Activated CD4-positive, alpha-beta memory T cell treated with anti-CD3 and anti-CD28 coated beads, Interleukin-2, amount 10 ng/mL, durations not matched to agents 7 days and 5 days (primary cell): ENCODE measurements at regions of chr7 and their contacts with region 1.

Region 1: GRCh38 chr7:104883718-104884452 is 130.1 kb upstream of the KMT2E start:
- DNase-seq: peak; percentile 72
- H3K4me3 Mint-ChIP-seq: no peak overlapping the region
- H3K27ac Mint-ChIP-seq: no peak overlapping the region
- H3K4me1 Mint-ChIP-seq: peaks cover 15% of the 10 kb centered on the region
- H3K27me3 Mint-ChIP-seq: peaks cover 11% of the 10 kb centered on the region

Region 2: DNA sequence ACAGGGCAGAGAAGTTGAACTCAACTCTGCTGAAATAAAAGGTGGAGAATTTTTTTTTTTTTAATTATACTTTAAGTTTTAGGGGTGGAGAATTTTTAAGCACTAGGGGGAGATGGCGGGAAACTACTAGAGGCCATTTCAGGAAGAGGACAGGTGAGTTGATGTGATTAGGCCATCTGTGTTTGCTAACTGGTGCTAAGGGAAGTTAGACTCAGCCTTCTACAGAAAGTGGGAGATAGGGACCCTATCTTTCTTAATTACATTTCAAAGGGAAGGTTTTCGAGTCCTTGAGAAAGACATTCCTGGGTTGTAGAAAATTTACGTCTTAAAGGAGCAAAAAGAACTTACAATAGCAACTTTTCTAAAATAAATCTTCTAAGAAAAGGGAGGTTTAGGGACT is 430.7 kb before region 1 on chr7:
- CTCF ChIA-PET with region 1: no interaction called
- POLR2A ChIA-PET with region 1: no interaction called
- DNase-seq: no peak
- H3K4me3 Mint-ChIP-seq: no peak overlapping the region
- H3K27ac Mint-ChIP-seq: no peak overlapping the region
- H3K4me1 Mint-ChIP-seq: no peaks in the 10 kb centered on the region
- H3K27me3 Mint-ChIP-seq: no peaks in the 10 kb centered on the region

Region 3: GRCh38 chr7:104679085-104679484 is 204.8 kb before region 1 on chr7:
- CTCF ChIA-PET with region 1: no interaction called
- POLR2A ChIA-PET with region 1: no interaction called
- DNase-seq: no peak
- H3K4me3 Mint-ChIP-seq: no peak overlapping the region
- H3K27ac Mint-ChIP-seq: no peak overlapping the region
- H3K4me1 Mint-ChIP-seq: no peaks in the 10 kb centered on the region
- H3K27me3 Mint-ChIP-seq: peaks cover 2% of the 10 kb centered on the region

Region 4: GRCh38 chr7:104723001-104723400 is 160.9 kb before region 1 on chr7:
- CTCF ChIA-PET with region 1: no interaction called
- POLR2A ChIA-PET with region 1: no interaction called
- DNase-seq: no peak
- H3K4me3 Mint-ChIP-seq: no peak overlapping the region
- H3K27ac Mint-ChIP-seq: no peak overlapping the region
- H3K4me1 Mint-ChIP-seq: no peaks in the 10 kb centered on the region
- H3K27me3 Mint-ChIP-seq: peaks cover 6% of the 10 kb centered on the region

Region 5: DNA sequence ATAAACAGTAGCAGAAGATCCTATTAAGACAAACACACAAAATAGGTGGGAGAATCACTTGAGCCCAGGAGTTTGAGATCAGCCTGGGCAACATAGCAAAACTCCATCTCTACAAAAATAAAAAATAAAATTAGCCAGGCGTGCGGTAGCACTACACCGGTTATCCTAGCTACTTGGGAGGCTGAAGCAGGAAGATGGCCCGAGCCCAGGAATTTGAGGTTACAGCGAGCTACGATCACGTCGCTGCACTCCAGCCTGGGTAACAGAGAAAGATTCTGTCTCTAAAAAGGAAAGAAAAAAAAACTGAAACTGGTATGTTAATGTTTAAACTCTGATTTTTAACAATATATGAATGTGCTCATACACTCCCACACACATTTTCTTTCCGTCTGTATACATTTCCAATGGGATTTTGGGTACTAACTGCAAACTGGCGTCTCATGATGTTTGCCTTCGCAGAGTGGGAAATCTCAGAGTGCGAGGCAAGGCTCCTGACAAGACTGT is 10.5 kb before region 1 on chr7:
- CTCF ChIA-PET with region 1: interaction called, 36 read pairs
- POLR2A ChIA-PET with region 1: no interaction called
- DNase-seq: no peak
- H3K4me3 Mint-ChIP-seq: no peak overlapping the region
- H3K27ac Mint-ChIP-seq: no peak overlapping the region
- H3K4me1 Mint-ChIP-seq: peaks cover 6% of the 10 kb centered on the region
- H3K27me3 Mint-ChIP-seq: no peaks in the 10 kb centered on the region

Region 6: DNA sequence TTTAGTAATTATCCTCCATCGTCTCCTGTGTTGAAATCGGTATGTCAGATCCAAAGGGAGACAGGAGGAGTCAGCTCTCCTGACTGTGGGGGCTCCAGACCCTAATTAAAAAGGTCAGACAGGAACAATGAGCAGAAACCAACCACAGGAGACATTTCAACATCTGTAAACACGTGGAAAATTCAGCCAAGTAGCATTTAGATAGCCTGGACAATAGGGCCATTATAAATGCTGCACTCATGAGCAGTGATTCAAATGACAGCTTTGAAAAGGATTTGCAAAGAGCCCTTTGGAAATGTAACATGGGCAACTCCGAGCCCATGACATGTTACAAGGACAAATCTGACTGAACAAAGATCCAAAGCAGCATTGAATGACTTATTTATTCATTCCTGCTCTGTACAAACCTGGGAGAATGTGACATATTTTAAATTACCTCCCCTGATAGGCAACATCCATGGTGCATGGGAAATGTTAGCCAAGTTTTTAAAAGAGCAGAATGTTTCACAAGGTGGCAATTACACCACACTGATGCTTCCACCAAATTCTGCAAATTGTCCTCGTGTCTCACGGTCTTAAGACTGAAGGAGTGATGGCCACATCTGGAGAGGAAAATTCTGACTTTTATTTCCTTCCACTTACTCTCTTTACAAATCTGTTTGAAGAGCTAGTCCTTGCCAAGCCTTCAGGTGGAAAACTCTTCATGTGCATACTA is 16.8 kb after region 1 on chr7:
- CTCF ChIA-PET with region 1: interaction called, 57 read pairs
- POLR2A ChIA-PET with region 1: interaction called, 3 read pairs
- DNase-seq: no peak
- H3K4me3 Mint-ChIP-seq: no peak overlapping the region
- H3K27ac Mint-ChIP-seq: no peak overlapping the region
- H3K4me1 Mint-ChIP-seq: peaks cover 7% of the 10 kb centered on the region
- H3K27me3 Mint-ChIP-seq: peaks cover 6% of the 10 kb centered on the region

Region 7: GRCh38 chr7:104914421-104914820 is 30.5 kb after region 1 on chr7:
- CTCF ChIA-PET with region 1: interaction called, 136 read pairs
- POLR2A ChIA-PET with region 1: interaction called, 3 read pairs
- DNase-seq: no peak
- H3K4me3 Mint-ChIP-seq: no peak overlapping the region
- H3K27ac Mint-ChIP-seq: no peak overlapping the region
- H3K4me1 Mint-ChIP-seq: peaks cover 3% of the 10 kb centered on the region
- H3K27me3 Mint-ChIP-seq: peaks cover 14% of the 10 kb centered on the region